ENCODE measurements at regions of chr15 and their contacts with region 1.

Region 1: DNA sequence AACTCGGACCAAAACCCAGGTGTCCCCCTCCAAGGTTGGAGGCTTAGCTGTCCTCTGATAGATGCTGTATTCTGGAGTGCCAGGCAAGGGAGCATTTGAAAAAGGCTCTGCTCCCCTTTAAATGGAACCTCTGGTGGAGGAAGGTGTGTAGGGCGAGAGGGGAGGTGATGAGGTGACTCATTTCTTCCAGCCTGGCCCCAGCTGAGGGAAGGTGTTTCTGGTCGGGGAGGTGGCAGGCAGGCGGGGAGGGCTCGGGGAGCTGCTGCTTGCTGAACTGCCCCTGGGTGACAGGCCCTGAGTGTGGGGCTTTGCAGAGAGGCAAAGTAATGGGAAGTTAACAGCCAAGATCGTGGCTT is 18.8 kb downstream of the PSTPIP1 start:
- DNase-seq: peak; percentile 79
- H3K4me3 Mint-ChIP-seq: peak overlapping the region; percentile 70
- H3K27ac Mint-ChIP-seq: peak overlapping the region; percentile 92
- H3K4me1 Mint-ChIP-seq: peaks cover 93% of the 10 kb centered on the region
- H3K27me3 Mint-ChIP-seq: no peaks in the 10 kb centered on the region

Region 2: DNA sequence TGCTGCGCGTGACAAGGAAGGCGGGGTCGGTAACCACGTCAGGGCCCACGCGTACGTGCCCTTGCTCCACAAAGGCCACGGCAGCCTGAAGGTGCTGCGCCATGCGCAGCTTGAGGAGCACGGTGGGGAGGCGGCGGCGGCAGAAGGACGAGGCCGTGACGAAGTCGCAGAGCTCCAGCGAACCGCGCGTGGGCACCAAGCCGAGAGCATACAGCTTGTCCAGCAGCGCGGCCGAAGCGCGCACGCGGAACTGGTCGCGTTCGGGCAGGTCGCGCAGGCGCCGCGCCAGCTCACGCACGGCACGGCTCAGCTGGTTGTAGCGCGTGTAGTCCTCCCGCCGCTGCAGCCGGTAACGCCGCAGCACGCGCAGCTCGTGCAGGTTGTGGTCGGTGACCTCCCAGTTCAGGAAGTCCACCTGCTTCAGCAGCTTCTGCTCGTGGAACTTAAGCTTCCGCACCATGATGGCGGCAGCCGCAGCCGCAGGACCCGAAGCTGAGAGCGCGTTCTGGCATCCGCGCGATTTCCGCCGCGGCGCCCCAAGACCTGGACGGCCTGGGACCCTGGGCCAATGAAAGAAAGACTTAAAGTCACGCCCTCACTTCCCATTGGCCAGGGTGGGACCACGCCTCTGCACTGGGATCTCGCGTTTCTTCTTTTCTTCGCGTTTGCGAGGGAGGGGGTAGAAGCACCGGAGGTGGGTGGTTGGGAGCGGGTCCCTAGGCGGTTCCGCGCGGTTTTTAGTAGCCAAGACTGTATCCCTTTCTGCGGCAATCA is 1373.9 kb before region 1 on chr15 and contains the start of gene IMP3:
- intact Hi-C with region 1: loop called (anchors 10 kb)
- DNase-seq: peak; percentile 93
- H3K4me3 Mint-ChIP-seq: peak within 1 kb of the TSS; percentile 90
- H3K27ac Mint-ChIP-seq: peak within 1 kb of the TSS; percentile 94
- H3K4me1 Mint-ChIP-seq: peaks cover 39% of the 10 kb centered on the region
- H3K27me3 Mint-ChIP-seq: peaks cover 6% of the 10 kb centered on the region
- total RNA-seq, gene IMP3: 110 and 113 TPM in 2 replicates

Region 3: GRCh38 chr15:75928680-75929608 is 1084.8 kb before region 1 on chr15:
- intact Hi-C with region 1: no loop called
- DNase-seq: no peak
- H3K4me3 Mint-ChIP-seq: no peak overlapping the region
- H3K27ac Mint-ChIP-seq: no peak overlapping the region
- H3K4me1 Mint-ChIP-seq: peaks cover 37% of the 10 kb centered on the region
- H3K27me3 Mint-ChIP-seq: no peaks in the 10 kb centered on the region

Region 4: GRCh38 chr15:76931397-76932007 is 82.3 kb before region 1 on chr15 and contains the start of gene RCN2:
- intact Hi-C with region 1: loop called (anchors 1 kb)
- DNase-seq: peak; percentile 93
- H3K4me3 Mint-ChIP-seq: peak within 1 kb of the TSS; percentile 92
- H3K27ac Mint-ChIP-seq: peak within 1 kb of the TSS; percentile 84
- H3K4me1 Mint-ChIP-seq: peaks cover 44% of the 10 kb centered on the region
- H3K27me3 Mint-ChIP-seq: peaks cover 5% of the 10 kb centered on the region
- total RNA-seq, gene RCN2: 39.9 and 42.2 TPM in 2 replicates

Region 5: DNA sequence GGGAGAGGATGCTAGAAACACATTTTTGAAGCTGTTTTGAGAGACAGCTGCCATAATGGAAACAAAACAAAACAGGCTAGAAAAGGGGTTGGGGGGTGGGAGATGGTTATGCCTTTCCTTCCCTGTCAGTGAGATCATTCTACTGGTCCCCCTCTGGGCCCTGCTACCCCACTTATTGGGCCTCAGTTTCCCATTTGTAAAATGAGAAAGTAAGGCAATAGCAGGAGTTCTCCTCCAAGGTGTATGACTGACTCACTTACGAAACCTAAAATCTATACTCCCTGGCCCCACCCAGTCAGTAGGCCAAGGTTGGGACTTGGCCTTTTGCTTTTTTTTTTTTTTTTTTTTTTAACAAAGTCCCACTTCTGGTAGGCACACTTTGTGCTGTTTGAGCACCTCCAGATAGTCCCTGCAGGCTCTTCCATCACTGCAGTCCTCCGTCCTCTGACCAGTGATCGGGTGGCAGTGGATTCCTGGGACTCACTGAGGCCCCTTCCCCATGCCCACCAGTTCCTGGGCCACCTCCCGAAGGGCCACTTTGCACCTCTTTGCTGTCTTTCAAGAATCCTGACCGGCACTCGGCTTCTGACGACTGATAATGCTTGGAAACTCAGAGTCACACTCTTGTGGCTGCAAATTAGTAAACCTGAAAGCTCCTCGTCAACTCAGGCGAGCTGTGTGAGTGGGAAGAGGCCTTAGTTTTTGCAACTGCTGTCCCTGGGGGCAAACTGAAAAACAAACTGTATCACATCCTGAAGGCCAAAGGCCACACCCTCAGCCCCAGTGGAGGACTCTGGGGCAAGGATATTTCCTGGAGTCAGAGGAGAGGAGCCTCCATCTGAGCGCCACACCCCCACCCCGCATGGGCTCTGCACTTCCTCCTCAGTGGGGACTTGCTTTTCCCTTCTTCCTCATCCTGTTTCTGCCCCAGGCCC is 25.6 kb before region 1 on chr15:
- intact Hi-C with region 1: loop called (anchors 1 kb)
- DNase-seq: peak; percentile 76
- H3K4me3 Mint-ChIP-seq: peak overlapping the region; percentile 73
- H3K27ac Mint-ChIP-seq: peak overlapping the region; percentile 99
- H3K4me1 Mint-ChIP-seq: peaks cover 90% of the 10 kb centered on the region
- H3K27me3 Mint-ChIP-seq: no peaks in the 10 kb centered on the region

Region 6: GRCh38 chr15:77002954-77003912 is 10.5 kb before region 1 on chr15:
- intact Hi-C with region 1: loop called (anchors 1 kb)
- DNase-seq: peak; percentile 74
- H3K4me3 Mint-ChIP-seq: peak overlapping the region; percentile 80
- H3K27ac Mint-ChIP-seq: peak overlapping the region; percentile 96
- H3K4me1 Mint-ChIP-seq: peaks cover 86% of the 10 kb centered on the region
- H3K27me3 Mint-ChIP-seq: no peaks in the 10 kb centered on the region

Region 7: GRCh38 chr15:77070495-77071304 is 56.9 kb after region 1 on chr15 and contains the start of gene TSPAN3:
- intact Hi-C with region 1: loop called (anchors 2 kb)
- DNase-seq: peak; percentile 91
- H3K4me3 Mint-ChIP-seq: peak within 1 kb of the TSS; percentile 87
- H3K27ac Mint-ChIP-seq: peak within 1 kb of the TSS; percentile 42
- H3K4me1 Mint-ChIP-seq: peaks cover 27% of the 10 kb centered on the region
- H3K27me3 Mint-ChIP-seq: peaks cover 19% of the 10 kb centered on the region
- total RNA-seq, gene TSPAN3: 41.5 and 41.6 TPM in 2 replicates

Measured in activated T-helper 1 cell treated with anti-CD3 and anti-CD28 coated beads, Interleukin-12 subunit alpha, Interleukin-12 subunit beta, Interleukin-2, Interleukin-4 antibody, amounts not matched to agents 30 ng/mL and 10 ng/mL and 1 ng/mL, durations not matched to agents 14 hours and 24 hours and 36 hours (primary cell).